Calu3 (cell line): ENCODE measurements at regions of chr6 and their contacts with region 1.

Region 1: GRCh38 chr6:44475779-44476434 is 88.4 kb downstream of the CDC5L start:
- DNase-seq: peak; percentile 97
- H3K4me3 Mint-ChIP-seq: no peak overlapping the region
- H3K27ac Mint-ChIP-seq: no peak overlapping the region
- H3K4me1 Mint-ChIP-seq: peaks cover 37% of the 10 kb centered on the region
- H3K27me3 Mint-ChIP-seq: no peaks in the 10 kb centered on the region
- CTCF ChIP-seq: peak; percentile 98

Region 2: DNA sequence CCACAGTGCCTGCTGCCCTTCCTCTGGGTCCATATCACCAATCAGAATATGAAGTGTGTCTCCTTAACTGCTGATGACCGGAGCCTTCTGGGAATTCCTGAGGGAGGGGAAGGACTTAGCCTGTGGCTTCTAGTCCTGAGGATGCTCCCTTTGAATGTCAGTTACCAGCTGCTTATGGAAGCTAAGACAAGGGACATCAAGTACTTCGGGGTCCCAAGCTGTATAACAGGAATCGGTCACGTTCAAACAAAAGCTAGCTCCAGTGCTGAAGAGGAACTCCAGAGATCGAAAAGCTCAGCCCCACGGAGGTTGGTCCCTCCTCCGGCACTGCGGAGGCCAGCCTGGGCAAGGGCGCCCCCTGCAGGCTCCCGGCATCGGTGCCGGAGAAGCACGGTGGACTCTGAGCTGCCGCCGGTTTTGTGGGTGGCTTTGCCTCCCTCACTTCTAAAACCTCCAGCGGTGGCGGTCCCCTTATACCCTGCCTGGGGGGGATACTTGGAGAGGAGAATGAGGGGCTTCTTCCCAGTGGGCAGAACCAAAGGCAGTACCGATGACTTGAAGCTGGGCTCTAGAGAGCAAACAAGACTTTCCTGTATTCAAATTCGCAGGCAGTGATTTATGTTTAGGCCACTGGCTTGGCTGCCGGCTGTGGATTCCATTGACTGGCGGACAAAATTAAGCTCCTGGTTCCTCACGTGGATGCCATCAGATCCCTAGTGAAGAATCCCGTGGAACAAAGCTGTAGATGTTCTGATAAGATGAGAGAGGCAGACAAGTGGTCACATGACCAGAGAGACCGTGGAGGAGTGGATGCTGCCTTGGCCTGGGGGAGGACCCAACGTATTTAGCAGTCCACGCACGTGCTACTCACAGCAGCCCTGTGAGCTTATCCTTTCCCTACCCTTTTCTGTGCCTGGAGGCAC is 1928.2 kb before region 1 on chr6:
- CTCF ChIA-PET with region 1: interaction called, 13 read pairs
- intact Hi-C with region 1: no loop called
- DNase-seq: peak; percentile 96
- H3K4me3 Mint-ChIP-seq: peak overlapping the region; percentile 68
- H3K27ac Mint-ChIP-seq: peak overlapping the region; percentile 58
- H3K4me1 Mint-ChIP-seq: peaks cover 11% of the 10 kb centered on the region
- H3K27me3 Mint-ChIP-seq: no peaks in the 10 kb centered on the region
- CTCF ChIP-seq: peak; percentile 97

Region 3: DNA sequence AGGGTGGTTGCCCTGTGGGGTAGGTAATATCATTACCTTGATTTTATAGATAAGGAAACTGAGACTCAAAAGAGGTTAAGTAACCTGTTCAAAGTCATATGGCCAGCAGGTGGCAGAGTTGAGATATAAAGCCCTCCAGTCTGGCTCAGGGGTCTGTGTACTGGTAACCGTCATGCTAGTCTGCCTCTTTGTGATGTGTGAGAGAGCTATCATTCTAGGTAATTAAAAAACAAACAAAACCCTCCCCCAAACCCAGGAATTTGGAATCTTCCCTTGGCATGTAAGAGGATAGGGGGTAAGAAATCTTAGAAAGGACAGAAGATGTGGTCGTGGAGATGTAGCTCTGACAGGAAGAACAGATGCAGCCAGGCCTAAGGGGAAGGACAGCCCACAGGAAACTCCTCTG is 117.6 kb after region 1 on chr6:
- CTCF ChIA-PET with region 1: interaction called, 12 read pairs
- intact Hi-C with region 1: no loop called
- DNase-seq: peak; percentile 68
- H3K4me3 Mint-ChIP-seq: no peak overlapping the region
- H3K27ac Mint-ChIP-seq: no peak overlapping the region
- H3K4me1 Mint-ChIP-seq: no peaks in the 10 kb centered on the region
- H3K27me3 Mint-ChIP-seq: peaks cover 64% of the 10 kb centered on the region
- CTCF ChIP-seq: peak; percentile 71

Region 4: GRCh38 chr6:44645276-44645675 is 169.4 kb after region 1 on chr6:
- CTCF ChIA-PET with region 1: interaction called, 10 read pairs
- intact Hi-C with region 1: loop called (anchors 2 kb)
- DNase-seq: no peak
- H3K4me3 Mint-ChIP-seq: no peak overlapping the region
- H3K27ac Mint-ChIP-seq: no peak overlapping the region
- H3K4me1 Mint-ChIP-seq: no peaks in the 10 kb centered on the region
- H3K27me3 Mint-ChIP-seq: peaks cover 59% of the 10 kb centered on the region
- CTCF ChIP-seq: no peak

Region 5: GRCh38 chr6:45377554-45378333 is 901.8 kb after region 1 on chr6 and contains the start of gene SUPT3H:
- CTCF ChIA-PET with region 1: interaction called, 3 read pairs
- intact Hi-C with region 1: loop called (anchors 10 kb)
- DNase-seq: peak; percentile 93
- H3K4me3 Mint-ChIP-seq: peak within 1 kb of the TSS; percentile 96
- H3K27ac Mint-ChIP-seq: peak within 1 kb of the TSS; percentile 97
- H3K4me1 Mint-ChIP-seq: no peaks in the 10 kb centered on the region
- H3K27me3 Mint-ChIP-seq: no peaks in the 10 kb centered on the region
- CTCF ChIP-seq: no peak
- total RNA-seq, gene SUPT3H: 7.0 and 10.3 TPM in 2 replicates

Region 6: GRCh38 chr6:45922728-45923351 is 1446.9 kb after region 1 on chr6:
- CTCF ChIA-PET with region 1: interaction called, 8 read pairs
- intact Hi-C with region 1: loop called (anchors 10 kb)
- DNase-seq: peak; percentile 52
- H3K4me3 Mint-ChIP-seq: no peak overlapping the region
- H3K27ac Mint-ChIP-seq: no peak overlapping the region
- H3K4me1 Mint-ChIP-seq: peaks cover 8% of the 10 kb centered on the region
- H3K27me3 Mint-ChIP-seq: no peaks in the 10 kb centered on the region
- CTCF ChIP-seq: peak; percentile 63